HCT116 (cell line): ENCODE measurements at regions of chr1 and their contacts with region 1.

Region 1: DNA sequence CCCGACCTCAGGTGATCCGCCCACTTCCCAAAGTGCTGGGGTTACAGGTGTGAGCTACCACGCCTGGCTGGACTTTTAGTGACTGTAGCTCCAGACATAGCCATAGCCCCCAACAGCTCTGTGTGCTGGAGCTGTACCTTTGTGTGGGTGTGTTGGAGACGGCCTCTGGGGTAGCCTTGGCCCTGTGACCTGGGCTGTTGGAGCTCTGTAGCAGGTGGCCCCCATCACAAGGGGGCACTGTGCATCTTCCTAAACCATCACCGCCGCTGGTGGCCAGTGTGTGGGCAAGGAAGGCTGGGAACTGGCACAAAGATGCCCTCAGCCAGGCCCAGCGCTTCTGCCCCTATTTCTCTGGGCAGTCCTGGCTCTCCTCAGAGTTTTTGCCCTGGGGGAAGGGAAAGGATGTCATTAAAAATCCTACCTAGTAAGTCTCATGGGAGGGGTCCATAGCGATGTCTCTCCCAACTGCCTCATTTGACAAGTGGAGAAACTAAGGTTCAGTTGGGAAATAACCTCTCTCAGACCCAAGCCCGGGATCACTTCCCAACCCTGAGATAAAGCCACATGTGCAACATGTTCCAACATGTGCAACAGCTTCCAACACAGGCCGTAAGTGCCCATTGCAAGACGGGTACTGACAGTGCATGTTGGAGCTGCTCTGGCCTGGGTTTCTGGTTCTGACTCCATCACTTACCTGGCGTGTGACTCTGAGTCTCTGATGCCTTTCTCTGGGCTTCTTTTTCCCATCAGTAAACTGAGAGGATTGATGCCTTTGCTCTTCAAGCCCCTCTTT is 38.2 kb upstream of the FOXO6 start:
- DNase-seq: no peak
- ATAC-seq: peak; percentile 98
- H3K4me3 ChIP-seq: no peak overlapping the region
- H3K27ac ChIP-seq: no peak overlapping the region
- H3K4me1 ChIP-seq: peaks cover 0 to 5% of the 10 kb centered on the region in 2 experiments; a peak in 1 of 4 replicates
- H3K27me3 ChIP-seq: no peaks in the 10 kb centered on the region
- CTCF ChIP-seq: peak; percentile 69 to 92 (median 75)
- POLR2A ChIP-seq: no peak
- RAD21 ChIP-seq: peak; percentile 96

Region 2: GRCh38 chr1:41341772-41342562 is 18.9 kb after region 1 on chr1:
- CTCF ChIA-PET with region 1: interaction called, 12 read pairs
- POLR2A ChIA-PET with region 1: interaction called, 3 read pairs
- RAD21 ChIA-PET with region 1: no interaction called
- intact Hi-C with region 1: no loop called
- DNase-seq: no peak
- ATAC-seq: peak; percentile 81
- H3K4me3 ChIP-seq: peak overlapping the region; percentile 19 to 44
- H3K27ac ChIP-seq: peak overlapping the region; percentile 38; the same call in 1 of the 2 replicates
- H3K4me1 ChIP-seq: peaks cover 15 to 24% of the 10 kb centered on the region in 2 experiments
- H3K27me3 ChIP-seq: no peaks in the 10 kb centered on the region
- CTCF ChIP-seq: no peak
- POLR2A ChIP-seq: no peak
- RAD21 ChIP-seq: no peak

Region 3: DNA sequence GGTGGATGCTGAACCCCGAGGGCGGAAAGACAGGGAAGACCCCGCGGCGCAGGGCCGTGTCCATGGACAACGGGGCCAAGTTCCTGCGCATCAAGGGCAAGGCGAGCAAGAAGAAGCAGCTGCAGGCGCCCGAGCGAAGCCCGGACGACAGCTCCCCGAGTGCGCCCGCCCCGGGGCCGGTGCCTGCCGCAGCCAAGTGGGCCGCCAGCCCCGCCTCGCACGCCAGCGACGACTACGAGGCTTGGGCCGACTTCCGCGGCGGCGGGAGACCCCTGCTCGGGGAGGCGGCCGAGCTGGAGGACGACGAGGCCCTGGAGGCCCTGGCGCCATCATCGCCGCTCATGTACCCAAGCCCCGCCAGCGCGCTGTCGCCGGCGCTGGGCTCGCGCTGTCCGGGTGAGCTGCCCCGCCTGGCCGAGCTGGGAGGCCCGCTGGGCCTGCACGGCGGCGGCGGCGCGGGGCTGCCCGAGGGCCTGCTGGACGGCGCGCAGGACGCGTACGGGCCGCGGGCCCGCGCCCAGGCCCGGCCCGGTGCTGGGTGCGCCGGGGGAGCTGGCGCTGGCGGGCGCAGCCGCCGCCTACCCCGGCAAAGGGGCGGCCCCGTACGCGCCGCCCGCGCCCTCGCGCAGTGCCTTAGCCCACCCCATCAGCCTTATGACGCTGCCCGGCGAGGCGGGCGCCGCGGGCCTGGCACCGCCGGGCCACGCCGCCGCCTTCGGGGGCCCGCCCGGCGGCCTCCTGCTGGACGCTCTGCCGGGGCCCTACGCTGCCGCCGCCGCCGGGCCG is 58.9 kb after region 1 on chr1:
- CTCF ChIA-PET with region 1: no interaction called
- POLR2A ChIA-PET with region 1: no interaction called
- RAD21 ChIA-PET with region 1: no interaction called
- intact Hi-C with region 1: no loop called
- DNase-seq: peak; percentile 42
- ATAC-seq: peak; percentile 82
- H3K4me3 ChIP-seq: peak overlapping the region; percentile 54 to 73
- H3K27ac ChIP-seq: peak overlapping the region; percentile 93
- H3K4me1 ChIP-seq: peaks cover 10 to 32% of the 10 kb centered on the region in 2 experiments; a peak in 3 of 4 replicates
- H3K27me3 ChIP-seq: 0 out of 2 replicates have a peak, but pooled peaks cover 3% of the 10 kb centered on the region
- CTCF ChIP-seq: no peak
- POLR2A ChIP-seq: no peak
- RAD21 ChIP-seq: no peak

Region 4: GRCh38 chr1:41423511-41424221 is 100.6 kb after region 1 on chr1:
- CTCF ChIA-PET with region 1: interaction called, 53 read pairs
- POLR2A ChIA-PET with region 1: interaction called, 6 read pairs
- RAD21 ChIA-PET with region 1: interaction called, 7 to 10 read pairs
- intact Hi-C with region 1: no loop called
- DNase-seq: no peak
- ATAC-seq: peak; percentile 50
- H3K4me3 ChIP-seq: peak overlapping the region; percentile 15 to 26
- H3K27ac ChIP-seq: peak overlapping the region; percentile 16; the same call in 1 of the 2 replicates
- H3K4me1 ChIP-seq: peaks cover 7 to 24% of the 10 kb centered on the region in 2 experiments; a peak in 3 of 4 replicates
- H3K27me3 ChIP-seq: no peaks in the 10 kb centered on the region
- CTCF ChIP-seq: peak; percentile 63 to 81 (median 64)
- POLR2A ChIP-seq: no peak
- RAD21 ChIP-seq: peak; percentile 65

Region 5: GRCh38 chr1:41432481-41433280 is 109.7 kb after region 1 on chr1:
- CTCF ChIA-PET with region 1: interaction called, 21 read pairs
- POLR2A ChIA-PET with region 1: no interaction called
- RAD21 ChIA-PET with region 1: interaction called in 1 of 2 experiments, 3 read pairs
- intact Hi-C with region 1: loop called (anchors 1 kb)
- DNase-seq: peak; percentile 75
- ATAC-seq: peak; percentile 96
- H3K4me3 ChIP-seq: peak overlapping the region in 1 of 2 experiments; percentile 28; a peak in 2 of 4 replicates
- H3K27ac ChIP-seq: peak overlapping the region; percentile 10; the same call in 1 of the 2 replicates
- H3K4me1 ChIP-seq: peaks cover 14 to 22% of the 10 kb centered on the region in 2 experiments
- H3K27me3 ChIP-seq: peaks cover 16% of the 10 kb centered on the region; the same call in 1 of the 2 replicates
- CTCF ChIP-seq: peak; percentile 85 to 96 (median 92)
- POLR2A ChIP-seq: no peak
- RAD21 ChIP-seq: peak; percentile 99

Region 6: GRCh38 chr1:41498809-41499208 is 175.8 kb after region 1 on chr1:
- CTCF ChIA-PET with region 1: no interaction called
- POLR2A ChIA-PET with region 1: no interaction called
- RAD21 ChIA-PET with region 1: no interaction called
- intact Hi-C with region 1: no loop called
- DNase-seq: no peak
- ATAC-seq: 0 out of 2 replicates have a peak, but pooled peaks have one; percentile 2
- H3K4me3 ChIP-seq: no peak overlapping the region; a peak in 1 of 4 replicates
- H3K27ac ChIP-seq: peak overlapping the region; percentile 24
- H3K4me1 ChIP-seq: peaks cover 69 to 87% of the 10 kb centered on the region in 2 experiments
- H3K27me3 ChIP-seq: no peaks in the 10 kb centered on the region
- CTCF ChIP-seq: no peak
- POLR2A ChIP-seq: no peak
- RAD21 ChIP-seq: no peak